IMR-90 (cell line): ENCODE measurements at regions of chr3 and their contacts with region 1.

Region 1: GRCh38 chr3:192831111-192831644 is 86.5 kb downstream of the MB21D2 start:
- DNase-seq: peak; percentile 98
- ATAC-seq: peak; percentile 80
- H3K4me3 ChIP-seq: no peak overlapping the region
- H3K27ac ChIP-seq: peak overlapping the region; percentile 46
- H3K4me1 ChIP-seq: peaks cover 29% of the 10 kb centered on the region
- H3K27me3 ChIP-seq: no peaks in the 10 kb centered on the region
- CTCF ChIP-seq: no peak
- POLR2A ChIP-seq: no peak
- RAD21 ChIP-seq: 0 out of 2 replicates have a peak, but pooled peaks have one; percentile 10

Region 2: DNA sequence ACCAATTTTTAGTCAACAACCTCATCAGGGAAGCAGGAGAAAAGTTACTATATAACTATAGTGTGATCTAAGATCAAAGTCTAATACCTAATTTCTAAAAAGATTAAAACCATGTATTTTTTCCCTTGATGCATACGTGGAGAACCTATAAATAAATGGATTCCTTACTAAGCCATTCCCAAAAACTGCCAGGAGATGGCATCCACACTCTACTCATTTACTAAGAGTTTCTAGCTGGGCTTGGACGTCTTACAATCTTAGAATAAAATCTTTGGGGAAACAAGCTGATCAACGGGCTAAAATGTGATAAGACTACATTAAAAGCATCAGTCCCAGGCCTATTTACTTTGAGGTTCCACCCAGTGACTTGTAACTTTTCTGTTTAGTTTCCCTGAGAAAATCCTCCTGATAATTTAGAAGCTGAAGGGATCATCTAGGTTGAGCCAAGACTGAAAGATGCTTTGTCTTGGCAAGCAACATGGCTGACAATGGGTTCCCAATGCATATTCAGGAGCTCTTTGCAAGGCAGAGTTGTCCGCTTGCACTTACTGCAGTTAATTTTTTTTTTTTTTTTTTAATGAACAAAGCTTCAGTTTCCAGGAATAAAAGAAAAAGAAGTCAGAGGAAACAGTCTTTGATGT is 18.3 kb before region 1 on chr3:
- CTCF ChIA-PET with region 1: no interaction called
- POLR2A ChIA-PET with region 1: no interaction called
- dilution Hi-C with region 1: no loop called
- in situ Hi-C with region 1: no loop called
- intact Hi-C with region 1: no loop called
- DNase-seq: peak; percentile 70
- ATAC-seq: peak; percentile 85
- H3K4me3 ChIP-seq: no peak overlapping the region
- H3K27ac ChIP-seq: no peak overlapping the region
- H3K4me1 ChIP-seq: peaks cover 8% of the 10 kb centered on the region
- H3K27me3 ChIP-seq: no peaks in the 10 kb centered on the region
- CTCF ChIP-seq: peak; percentile 78
- POLR2A ChIP-seq: no peak
- RAD21 ChIP-seq: peak; percentile 77

Region 3: GRCh38 chr3:192847941-192848340 is 16.8 kb after region 1 on chr3:
- CTCF ChIA-PET with region 1: no interaction called
- POLR2A ChIA-PET with region 1: no interaction called
- dilution Hi-C with region 1: no loop called
- in situ Hi-C with region 1: no loop called
- intact Hi-C with region 1: loop called (anchors 2 kb)
- DNase-seq: peak; percentile 84
- ATAC-seq: peak; percentile 61
- H3K4me3 ChIP-seq: no peak overlapping the region
- H3K27ac ChIP-seq: no peak overlapping the region
- H3K4me1 ChIP-seq: peaks cover 33% of the 10 kb centered on the region
- H3K27me3 ChIP-seq: no peaks in the 10 kb centered on the region
- CTCF ChIP-seq: no peak
- POLR2A ChIP-seq: no peak
- RAD21 ChIP-seq: no peak

Region 4: DNA sequence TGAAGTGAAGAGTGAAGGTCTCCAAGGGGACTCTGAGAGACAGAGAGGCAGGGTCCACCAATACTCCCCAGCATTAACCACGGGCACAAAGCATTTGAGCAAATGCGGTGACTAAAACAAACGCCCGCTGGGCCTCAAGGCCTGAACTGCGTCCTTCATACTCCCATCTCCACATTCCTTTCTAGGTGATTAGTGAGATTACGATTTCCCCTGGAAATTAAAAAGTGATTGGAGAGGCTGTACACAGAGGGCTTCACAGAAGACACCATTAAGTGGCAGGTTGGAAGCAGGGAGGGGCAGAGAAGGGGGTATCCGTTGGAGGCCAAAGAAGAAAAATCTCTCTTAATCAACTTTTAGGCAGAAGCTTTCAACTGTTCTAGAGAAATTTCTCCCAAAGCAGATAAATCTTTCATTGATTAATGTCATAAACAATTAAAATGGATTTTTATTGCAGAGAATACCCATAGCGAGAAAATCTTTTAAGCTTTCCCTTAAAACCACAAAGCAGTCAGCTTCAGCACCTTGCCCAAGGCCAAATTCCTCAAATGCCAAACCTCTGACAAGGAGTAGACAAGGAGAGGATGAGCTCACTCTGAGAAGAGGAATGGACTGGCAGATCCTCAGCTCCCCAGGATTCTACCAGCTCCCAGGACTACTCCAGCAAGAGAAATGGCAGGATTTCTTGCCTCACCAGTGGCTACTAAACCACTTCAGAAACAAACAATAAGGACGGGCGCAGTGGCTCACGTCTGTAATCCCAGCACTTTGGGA is 48.3 kb after region 1 on chr3:
- CTCF ChIA-PET with region 1: no interaction called
- POLR2A ChIA-PET with region 1: no interaction called
- dilution Hi-C with region 1: no loop called
- in situ Hi-C with region 1: no loop called
- intact Hi-C with region 1: loop called (anchors 1 kb)
- DNase-seq: peak; percentile 96
- ATAC-seq: peak; percentile 82
- H3K4me3 ChIP-seq: no peak overlapping the region
- H3K27ac ChIP-seq: peak overlapping the region; percentile 49
- H3K4me1 ChIP-seq: peaks cover 14% of the 10 kb centered on the region
- H3K27me3 ChIP-seq: no peaks in the 10 kb centered on the region
- CTCF ChIP-seq: no peak
- POLR2A ChIP-seq: no peak
- RAD21 ChIP-seq: no peak